Posterior vena cava (tissue), 2 donors: ENCODE measurements at regions of chr10 and their contacts with region 1.

Region 1: GRCh38 chr10:22340362-22341189 is 4.7 kb upstream of the SPAG6 start:
- DNase-seq: peak; percentile 91

Region 2: DNA sequence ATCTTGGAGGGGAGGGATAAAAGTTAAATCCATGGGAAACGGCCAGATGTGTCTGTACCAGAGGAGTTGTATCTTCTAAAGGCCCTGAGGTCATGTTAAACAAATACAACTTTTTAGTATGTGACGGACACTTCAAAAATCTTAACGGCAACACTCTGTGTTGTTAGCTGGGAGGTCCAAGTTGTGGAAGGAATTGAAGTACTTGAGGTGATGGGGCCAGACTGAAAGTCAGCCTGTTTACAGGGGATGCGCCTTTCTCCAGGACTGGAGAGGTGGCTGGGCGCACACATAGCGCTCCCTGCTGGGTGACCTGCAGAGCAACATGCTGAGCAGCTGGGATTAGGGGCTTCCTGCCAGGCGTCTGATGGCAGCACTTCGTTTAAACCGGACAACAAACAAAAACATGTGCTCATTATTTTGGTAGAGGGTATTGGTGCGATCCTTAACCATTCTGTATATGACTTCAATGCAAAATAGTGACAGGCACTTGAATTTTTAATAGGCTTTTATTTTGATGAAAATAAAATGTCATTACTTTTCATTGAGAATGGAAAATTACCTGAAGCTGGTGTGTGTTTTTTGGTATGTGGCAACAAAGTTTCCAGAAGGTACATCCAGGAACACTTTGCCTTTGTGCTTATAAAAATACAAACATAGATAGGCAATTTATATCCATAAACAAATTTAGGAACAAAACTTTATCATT is 608.4 kb before region 1 on chr10:
- intact Hi-C with region 1: no loop called
- DNase-seq: peak; percentile 82

Region 3: DNA sequence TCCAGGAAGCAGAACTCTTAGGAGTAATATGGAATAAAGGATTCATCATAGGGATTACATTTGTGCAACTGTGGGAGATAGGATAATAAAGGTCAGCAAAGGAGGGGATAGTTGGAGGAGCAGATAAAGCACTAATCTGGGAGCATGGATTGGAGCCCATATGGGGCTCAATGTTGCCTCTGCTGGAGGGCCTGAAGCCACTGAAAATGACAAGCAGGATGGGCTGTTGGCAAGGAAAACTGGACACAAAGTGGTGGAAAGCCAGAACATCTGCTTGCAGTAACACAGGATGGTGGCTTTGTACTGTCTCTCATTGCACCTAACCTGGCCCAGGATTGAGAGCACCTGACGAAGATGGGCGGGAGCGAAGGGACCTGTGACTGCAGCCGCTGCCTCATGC is 39.4 kb before region 1 on chr10:
- intact Hi-C with region 1: no loop called
- DNase-seq: no peak

Region 4: GRCh38 chr10:22325272-22326144 is 15.1 kb before region 1 on chr10:
- intact Hi-C with region 1: loop called in 1 of 2 experiments (anchors 1 kb)
- DNase-seq: peak; percentile 93